ENCODE measurements at regions of chr12 and their contacts with region 1.

Region 1: DNA sequence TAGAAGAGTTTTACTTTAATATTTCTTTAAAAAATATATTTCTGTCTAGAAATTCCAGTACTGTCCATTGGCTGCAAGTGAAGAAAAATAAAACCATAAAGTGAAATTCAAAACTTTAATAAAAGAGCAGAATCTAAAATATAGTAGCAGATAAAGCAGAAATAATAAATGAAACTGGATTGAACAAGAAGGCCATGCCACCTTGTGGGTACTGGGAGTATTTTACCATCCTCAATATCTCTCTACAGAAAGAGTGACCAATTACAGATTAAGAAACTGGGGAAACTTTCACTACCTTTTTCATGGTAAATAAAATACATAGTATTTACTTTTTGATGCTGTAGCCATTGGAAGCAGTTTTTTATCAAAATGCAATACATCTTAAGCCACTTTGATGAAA is 220.5 kb downstream of the BCAT1 start:
- H3K4me3 Mint-ChIP-seq: no peak overlapping the region
- H3K27ac Mint-ChIP-seq: no peak overlapping the region
- H3K4me1 Mint-ChIP-seq: peaks cover 20% of the 10 kb centered on the region
- H3K27me3 Mint-ChIP-seq: no peaks in the 10 kb centered on the region

Region 2: GRCh38 chr12:24705741-24706358 is 22.5 kb before region 1 on chr12:
- intact Hi-C with region 1: no loop called
- H3K4me3 Mint-ChIP-seq: peak overlapping the region; percentile 14
- H3K27ac Mint-ChIP-seq: peak overlapping the region; percentile 91
- H3K4me1 Mint-ChIP-seq: peaks cover 26% of the 10 kb centered on the region
- H3K27me3 Mint-ChIP-seq: no peaks in the 10 kb centered on the region

Region 3: GRCh38 chr12:24770821-24771220 is 42.5 kb after region 1 on chr12:
- intact Hi-C with region 1: loop called (anchors 5 kb)
- H3K4me3 Mint-ChIP-seq: no peak overlapping the region
- H3K27ac Mint-ChIP-seq: no peak overlapping the region
- H3K4me1 Mint-ChIP-seq: no peaks in the 10 kb centered on the region
- H3K27me3 Mint-ChIP-seq: no peaks in the 10 kb centered on the region

Measured in dendritic cell treated with granulocyte-macrophage colony-stimulating factor and Interleukin-4, amounts not matched to agents 40 ng/mL and 50 ng/mL, for 4 days (primary cell).